ENCODE measurements at regions of chr3 and their contacts with region 1.

Region 1: DNA sequence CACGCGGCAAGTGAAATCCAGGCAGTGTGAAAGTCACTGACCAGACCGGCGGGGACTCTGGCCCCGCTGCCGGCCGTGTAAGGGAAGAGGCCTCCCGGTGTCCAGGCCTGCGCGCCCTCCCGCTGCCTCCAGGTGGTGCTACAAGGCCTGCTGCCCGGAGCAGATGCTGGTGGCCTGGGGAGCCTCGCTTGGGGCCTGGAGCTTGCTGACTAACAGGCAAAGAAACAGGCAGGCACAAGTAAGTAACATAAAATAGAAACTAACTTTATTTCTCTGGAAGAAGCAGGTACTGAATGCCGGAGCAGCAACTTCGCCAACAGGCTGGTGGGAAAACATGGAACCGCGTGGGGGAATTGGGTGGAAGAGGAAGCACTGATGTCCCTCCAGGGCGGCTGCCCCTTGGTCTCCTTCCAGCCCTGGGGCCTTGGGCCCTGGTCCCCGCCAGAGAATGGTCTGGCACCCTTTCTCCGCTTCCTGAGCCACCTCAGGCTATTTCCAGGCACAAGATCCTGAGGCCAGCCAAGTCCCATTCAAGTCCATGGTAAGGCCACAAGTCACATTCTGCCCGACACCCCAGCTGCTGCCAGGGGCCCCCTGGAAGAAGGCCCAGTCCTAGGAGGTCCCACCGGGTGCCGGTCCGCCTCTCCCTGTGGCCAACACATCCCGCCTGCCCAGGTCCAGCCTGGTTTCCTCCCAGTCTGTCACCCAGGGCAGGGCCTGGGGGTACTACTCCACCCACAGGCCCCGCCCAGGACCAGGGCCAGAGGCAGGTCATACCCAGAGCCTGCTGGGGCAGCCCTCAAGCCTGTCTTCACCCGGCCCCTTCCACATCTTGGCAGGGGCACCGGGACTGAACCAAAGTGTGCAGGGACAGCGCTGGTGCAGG is 45.0 kb downstream of the TNK2 start:
- DNase-seq: peak; percentile 47
- H3K4me3 Mint-ChIP-seq: no peak overlapping the region
- H3K27ac Mint-ChIP-seq: no peak overlapping the region
- H3K4me1 Mint-ChIP-seq: peaks cover 10% of the 10 kb centered on the region
- H3K27me3 Mint-ChIP-seq: no peaks in the 10 kb centered on the region

Region 2: DNA sequence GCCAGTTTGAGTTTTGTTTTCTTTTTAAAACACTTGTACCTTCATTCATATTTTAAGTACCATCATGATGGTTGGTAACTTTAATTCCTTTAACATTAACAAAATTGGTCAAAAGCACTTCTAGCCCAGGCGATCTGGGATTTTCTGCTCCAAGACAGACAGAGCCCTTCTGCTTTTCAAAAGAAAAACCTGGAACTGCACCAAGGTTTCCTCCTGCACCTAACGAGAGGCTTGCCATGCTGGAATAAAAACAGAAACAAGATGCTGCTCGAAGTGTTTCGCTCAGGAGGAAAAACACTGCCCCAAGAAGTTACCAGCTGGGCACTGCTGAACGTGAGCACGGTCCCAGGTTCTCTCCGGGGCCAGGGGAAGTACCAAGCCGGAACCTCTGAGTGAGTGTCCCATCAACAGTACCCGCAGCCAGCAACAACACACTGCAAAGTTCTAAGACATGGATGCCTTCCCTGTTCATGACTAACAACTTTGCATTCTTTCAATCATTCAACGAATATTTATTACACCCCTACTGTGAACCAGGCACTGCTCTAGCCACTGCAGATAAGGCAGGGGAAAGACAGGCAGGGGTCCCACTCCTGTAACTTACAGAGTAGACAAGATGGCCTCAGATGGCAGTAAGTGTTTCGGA is 691.2 kb before region 1 on chr3:
- intact Hi-C with region 1: no loop called
- DNase-seq: no peak
- H3K4me3 Mint-ChIP-seq: no peak overlapping the region
- H3K27ac Mint-ChIP-seq: no peak overlapping the region
- H3K4me1 Mint-ChIP-seq: no peaks in the 10 kb centered on the region
- H3K27me3 Mint-ChIP-seq: no peaks in the 10 kb centered on the region

Region 3: GRCh38 chr3:195558602-195559001 is 304.8 kb before region 1 on chr3:
- intact Hi-C with region 1: loop called (anchors 2 kb)
- DNase-seq: no peak
- H3K4me3 Mint-ChIP-seq: no peak overlapping the region
- H3K27ac Mint-ChIP-seq: no peak overlapping the region
- H3K4me1 Mint-ChIP-seq: peaks cover 23% of the 10 kb centered on the region
- H3K27me3 Mint-ChIP-seq: peaks cover 3% of the 10 kb centered on the region

Region 4: DNA sequence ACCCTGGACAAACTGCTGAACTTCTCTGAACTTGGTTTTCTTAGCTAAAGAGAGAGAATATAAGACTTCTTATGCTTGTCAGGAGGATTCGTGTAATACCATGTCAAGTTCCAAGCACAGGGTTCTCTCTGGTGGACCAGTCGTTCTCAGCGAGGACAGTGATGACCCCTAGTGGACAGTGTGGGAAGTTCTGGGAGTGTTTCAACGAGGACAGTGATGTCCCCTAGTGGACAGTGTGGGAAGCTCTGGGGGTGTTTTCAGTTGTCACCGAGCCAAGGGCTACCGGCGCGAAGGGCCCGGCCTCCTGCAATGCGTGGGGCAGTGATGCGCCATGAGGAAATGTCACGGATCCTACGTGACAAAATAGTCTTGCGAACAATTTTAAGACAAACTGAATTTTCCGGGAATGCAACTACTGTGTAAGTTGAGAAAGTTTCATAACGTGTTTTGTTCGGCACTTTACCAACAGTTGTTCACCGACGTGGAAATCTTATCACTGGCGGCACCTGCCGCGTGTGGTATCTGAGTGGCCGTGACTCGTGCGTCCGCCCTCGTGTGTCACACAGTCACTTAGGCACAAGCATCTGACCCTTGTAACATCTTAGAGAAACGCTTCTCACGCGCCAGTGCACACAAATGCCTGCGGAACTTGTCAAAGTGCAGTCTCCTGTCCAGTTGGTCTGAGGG is 12.4 kb before region 1 on chr3:
- intact Hi-C with region 1: loop called (anchors 1 kb)
- DNase-seq: peak; percentile 83
- H3K4me3 Mint-ChIP-seq: no peak overlapping the region
- H3K27ac Mint-ChIP-seq: peak overlapping the region; percentile 41
- H3K4me1 Mint-ChIP-seq: no peaks in the 10 kb centered on the region
- H3K27me3 Mint-ChIP-seq: peaks cover 5% of the 10 kb centered on the region

Region 5: DNA sequence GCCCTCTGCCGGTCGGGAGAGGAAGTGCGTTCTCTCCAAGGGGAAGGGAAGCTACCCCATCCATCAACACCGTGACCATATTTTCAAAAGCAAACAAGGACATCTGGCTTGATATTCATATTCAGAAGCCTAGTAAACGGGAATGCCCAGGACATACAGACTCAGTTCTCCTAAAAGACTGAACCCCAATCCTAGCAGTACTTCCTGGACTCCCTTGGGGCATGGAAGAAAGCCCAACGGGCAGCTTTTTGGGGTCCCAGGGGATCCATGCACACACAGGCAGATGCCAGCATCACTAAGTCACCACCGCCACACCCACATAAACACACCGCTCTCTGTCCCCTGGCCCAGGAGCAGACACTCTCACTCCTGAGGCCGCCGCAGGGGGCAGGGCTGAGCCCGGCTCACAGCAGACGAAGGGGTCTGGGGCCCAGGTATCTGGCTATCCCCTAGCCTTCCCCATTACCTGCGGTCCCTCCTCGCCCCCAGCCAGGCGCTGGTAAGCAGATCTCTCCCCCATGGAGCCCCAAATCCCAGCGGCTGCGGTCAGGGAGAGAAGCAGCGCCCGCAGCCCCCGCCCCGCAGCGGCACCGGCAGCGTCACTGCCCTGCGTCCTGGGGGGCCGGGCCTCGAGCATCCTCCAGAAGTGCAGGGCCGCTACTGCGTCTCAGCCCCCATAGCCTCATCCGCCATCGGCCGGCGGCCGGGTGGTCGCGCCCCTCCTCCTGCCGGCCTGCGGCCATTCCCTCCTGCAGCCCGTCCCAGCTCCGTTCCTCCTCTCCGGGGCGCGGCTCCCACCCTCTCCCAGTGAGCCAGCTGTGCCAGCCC is 31.6 kb after region 1 on chr3:
- intact Hi-C with region 1: loop called (anchors 1 kb)
- DNase-seq: peak; percentile 61
- H3K4me3 Mint-ChIP-seq: peak overlapping the region; percentile 90
- H3K27ac Mint-ChIP-seq: peak overlapping the region; percentile 88
- H3K4me1 Mint-ChIP-seq: peaks cover 44% of the 10 kb centered on the region
- H3K27me3 Mint-ChIP-seq: no peaks in the 10 kb centered on the region

Measured in activated T-helper 1 cell treated with anti-CD3 and anti-CD28 coated beads, Interleukin-12 subunit alpha, Interleukin-12 subunit beta, Interleukin-2, Interleukin-4 antibody, amounts not matched to agents 30 ng/mL and 10 ng/mL and 1 ng/mL, durations not matched to agents 14 hours and 24 hours and 36 hours (primary cell).